AG04449 (cell line): ENCODE measurements at regions of chr16 and their contacts with region 1.

Region 1: DNA sequence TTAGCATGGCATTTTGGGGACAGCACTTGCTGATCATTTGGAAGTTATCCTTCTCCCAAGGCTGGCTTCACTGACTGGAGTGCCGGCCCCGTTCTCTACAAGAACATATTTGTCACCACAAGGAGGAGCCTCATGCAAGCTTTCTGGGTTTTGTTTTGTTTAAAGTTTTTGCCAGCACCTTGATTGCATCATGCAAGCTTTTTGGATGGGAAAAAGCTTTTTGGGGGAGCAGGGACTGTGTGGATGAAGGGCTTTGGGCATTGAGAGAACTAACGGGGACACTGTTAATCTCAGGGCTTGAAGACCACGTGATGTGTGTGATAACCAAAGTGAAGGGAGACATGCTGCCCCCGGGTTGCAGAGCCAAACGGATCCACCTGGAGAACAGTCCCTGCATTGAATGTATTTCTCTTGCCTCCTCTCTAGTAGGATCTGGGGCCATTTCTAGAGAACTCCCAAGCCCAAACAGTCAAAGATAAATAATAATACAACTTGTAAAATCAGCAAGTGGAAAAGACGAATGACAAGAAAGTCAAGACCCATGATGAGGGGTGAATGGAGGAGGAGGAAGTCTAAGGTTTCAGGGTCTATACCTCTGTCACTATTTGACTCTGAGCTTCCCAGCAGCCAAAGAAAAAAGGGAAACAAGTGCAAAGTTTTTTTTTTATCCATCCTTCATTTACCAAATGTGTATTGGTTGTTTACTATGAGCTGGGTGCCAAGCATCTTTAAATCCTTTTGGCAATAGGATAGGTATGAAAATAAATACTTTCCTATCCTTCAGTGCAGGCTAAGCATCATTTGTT is 17.2 kb downstream of the TMEM114 start:
- DNase-seq: no peak
- H3K4me3 ChIP-seq: no peak overlapping the region; the same call in 1 of the 2 replicates
- CTCF ChIP-seq: peak; percentile 19

Region 2: DNA sequence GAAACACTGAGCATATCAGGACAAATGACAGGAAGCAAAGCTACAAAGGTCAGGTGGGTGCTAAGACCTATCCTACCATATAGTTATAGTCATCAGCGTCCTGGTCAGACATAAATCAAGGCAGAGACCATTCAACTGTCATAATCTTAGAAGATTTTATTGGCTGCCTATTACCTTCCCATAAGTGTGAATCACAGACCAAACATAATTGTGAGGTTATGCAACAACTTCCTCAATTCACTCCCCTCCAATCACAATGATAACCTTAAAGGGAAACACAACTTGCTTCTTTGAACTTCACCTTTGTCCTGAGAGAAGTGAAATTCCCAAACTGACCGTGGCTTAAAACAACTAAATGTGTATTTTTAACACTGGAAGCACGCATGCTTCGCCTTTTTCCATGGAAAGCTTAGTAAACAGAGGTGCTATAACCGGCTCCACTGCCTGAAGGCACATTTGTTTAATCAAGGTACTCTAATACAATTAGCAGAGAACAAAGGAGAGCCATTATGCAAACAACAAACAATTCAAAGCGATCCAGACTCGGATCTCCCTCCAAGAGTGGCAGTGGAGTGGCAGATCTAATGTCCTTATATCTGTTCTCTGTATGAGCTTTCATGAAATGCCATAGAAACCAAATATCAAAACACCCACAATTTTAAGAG is 67.7 kb before region 1 on chr16:
- CTCF ChIA-PET with region 1: no interaction called
- POLR2A ChIA-PET with region 1: no interaction called
- DNase-seq: no peak
- H3K4me3 ChIP-seq: no peak overlapping the region
- CTCF ChIP-seq: no peak

Region 3: DNA sequence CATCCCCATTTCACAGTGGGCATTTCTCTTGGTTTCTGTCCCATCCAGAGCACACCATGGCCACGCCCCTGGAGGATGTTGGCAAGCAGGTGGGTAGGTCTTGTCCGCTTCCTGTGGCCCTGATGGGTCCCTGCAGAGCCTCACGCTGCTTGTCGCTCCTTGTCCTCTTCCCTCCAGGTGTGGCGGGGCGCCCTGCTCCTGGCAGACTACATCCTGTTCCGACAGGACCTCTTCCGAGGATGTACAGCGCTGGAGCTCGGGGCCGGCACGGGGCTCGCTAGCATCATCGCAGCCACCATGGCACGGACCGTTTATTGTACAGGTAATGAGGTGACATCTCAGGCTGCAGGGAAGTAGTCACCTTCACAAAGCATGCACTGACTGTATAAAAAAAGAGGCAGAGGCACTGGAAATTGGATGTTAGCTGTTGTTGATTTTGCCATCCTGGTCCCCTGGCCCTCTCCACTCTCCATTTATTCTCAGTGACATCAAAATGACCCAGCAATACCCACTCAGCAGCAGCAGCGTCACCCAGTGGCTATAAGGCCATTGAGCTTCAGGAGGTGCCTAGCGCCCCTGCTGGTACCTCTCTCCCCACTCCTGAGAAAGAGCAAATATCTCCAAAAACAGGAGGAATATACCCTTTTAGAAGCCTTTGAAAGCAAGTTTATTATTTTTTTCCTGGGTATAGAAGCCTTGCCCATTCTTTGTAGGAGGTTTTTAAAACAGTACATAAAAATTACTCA is 62.0 kb after region 1 on chr16:
- CTCF ChIA-PET with region 1: interaction called, 27 read pairs
- POLR2A ChIA-PET with region 1: interaction called, 3 read pairs
- DNase-seq: no peak
- H3K4me3 ChIP-seq: no peak overlapping the region
- CTCF ChIP-seq: peak; percentile 63

Region 4: DNA sequence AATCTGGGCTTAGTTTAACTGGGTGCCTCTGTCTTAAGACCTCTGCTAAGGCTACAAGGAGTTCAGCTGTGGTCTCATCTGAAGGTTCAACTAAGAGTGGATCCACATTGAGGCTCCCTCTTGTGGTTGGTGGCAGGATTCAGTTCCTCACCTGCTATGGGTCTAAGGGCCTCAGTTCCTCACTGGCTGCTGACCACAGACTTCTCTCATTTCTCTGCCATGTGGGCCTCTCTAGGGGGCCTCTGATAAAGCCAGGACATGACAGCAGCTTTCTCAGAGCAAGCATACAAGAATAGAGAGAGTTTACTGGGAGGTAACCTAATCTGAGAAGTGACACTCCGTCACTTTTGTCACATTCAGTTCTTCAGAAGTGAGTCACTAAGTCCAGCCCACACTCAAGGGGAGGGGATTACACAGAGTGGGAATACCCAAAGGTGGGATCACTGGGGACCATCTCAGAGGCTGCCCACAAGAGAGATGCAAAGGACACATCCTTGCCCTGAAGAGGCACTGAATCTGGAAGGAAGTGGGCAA is 82.1 kb after region 1 on chr16:
- CTCF ChIA-PET with region 1: interaction called, 114 read pairs
- POLR2A ChIA-PET with region 1: interaction called, 3 read pairs
- DNase-seq: no peak
- H3K4me3 ChIP-seq: no peak overlapping the region
- CTCF ChIP-seq: peak; percentile 57

Region 5: DNA sequence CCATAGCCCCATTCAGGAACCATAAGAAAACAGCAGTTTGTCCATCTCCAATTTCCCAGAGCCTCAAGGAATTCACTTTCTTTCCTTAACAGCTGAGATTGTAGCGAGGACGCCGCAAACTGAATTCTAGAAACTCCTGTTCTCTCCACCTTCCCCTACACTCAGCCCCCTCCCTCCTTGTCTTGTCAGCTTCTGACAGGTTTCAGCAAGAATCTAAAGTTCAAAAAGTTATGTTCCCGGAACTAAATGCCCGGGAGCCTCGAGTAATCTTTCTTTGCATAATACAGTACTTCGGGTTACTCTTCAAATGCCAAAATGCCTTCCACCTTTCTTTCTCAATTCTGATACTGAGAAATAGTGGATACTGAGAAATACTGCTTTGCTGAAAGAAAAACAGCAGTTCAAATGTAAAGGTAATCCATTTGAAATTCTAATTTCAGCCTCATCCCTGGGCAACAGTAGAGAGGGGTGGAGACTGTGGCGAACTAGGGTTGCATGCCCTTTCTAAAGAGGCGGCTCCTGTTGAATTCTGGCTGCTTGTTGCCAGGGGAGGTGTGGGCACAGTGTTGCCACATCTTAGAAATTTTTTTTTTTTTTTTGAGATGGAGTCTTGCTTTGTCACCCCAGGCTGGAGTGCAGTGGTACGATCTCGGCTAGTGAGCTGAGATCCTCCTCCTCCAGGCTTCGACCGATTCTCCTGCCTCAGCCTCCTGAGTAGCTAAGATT is 454.1 kb after region 1 on chr16:
- CTCF ChIA-PET with region 1: no interaction called
- POLR2A ChIA-PET with region 1: no interaction called
- DNase-seq: no peak
- H3K4me3 ChIP-seq: no peak overlapping the region
- CTCF ChIP-seq: no peak